ENCODE measurements at regions of chr3 and their contacts with region 1.

Region 1: GRCh38 chr3:55704521-55704920 is 217.4 kb upstream of the WNT5A start:
- DNase-seq: no peak
- ATAC-seq: no peak

Region 2: GRCh38 chr3:55476515-55476914 is 228.0 kb before region 1 on chr3:
- intact Hi-C with region 1: no loop called
- DNase-seq: no peak
- ATAC-seq: no peak

Region 3: DNA sequence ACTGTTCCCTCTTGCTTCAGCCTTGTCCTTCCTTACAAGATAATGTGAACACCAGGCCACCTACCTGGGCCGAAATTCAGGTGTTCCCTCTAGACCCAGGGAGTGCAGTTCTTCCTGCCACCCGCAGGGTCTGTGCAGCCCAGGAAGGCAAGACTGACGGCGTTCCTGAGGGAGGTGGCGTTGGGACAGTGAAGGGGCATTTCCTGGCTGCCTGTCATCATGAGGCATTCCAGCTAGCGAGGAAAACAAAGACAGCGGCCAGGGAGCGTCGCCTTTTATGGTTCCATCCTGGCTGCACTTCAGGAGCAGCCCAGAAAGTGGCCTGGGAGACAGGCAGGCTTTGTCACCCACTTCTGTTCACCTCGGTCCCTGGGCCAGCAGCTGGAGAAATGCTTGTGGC is 132.6 kb before region 1 on chr3:
- intact Hi-C with region 1: loop called in 1 of 2 experiments (anchors 10 kb)
- DNase-seq: peak; percentile 66
- ATAC-seq: peak; percentile 90 to 92

Region 4: DNA sequence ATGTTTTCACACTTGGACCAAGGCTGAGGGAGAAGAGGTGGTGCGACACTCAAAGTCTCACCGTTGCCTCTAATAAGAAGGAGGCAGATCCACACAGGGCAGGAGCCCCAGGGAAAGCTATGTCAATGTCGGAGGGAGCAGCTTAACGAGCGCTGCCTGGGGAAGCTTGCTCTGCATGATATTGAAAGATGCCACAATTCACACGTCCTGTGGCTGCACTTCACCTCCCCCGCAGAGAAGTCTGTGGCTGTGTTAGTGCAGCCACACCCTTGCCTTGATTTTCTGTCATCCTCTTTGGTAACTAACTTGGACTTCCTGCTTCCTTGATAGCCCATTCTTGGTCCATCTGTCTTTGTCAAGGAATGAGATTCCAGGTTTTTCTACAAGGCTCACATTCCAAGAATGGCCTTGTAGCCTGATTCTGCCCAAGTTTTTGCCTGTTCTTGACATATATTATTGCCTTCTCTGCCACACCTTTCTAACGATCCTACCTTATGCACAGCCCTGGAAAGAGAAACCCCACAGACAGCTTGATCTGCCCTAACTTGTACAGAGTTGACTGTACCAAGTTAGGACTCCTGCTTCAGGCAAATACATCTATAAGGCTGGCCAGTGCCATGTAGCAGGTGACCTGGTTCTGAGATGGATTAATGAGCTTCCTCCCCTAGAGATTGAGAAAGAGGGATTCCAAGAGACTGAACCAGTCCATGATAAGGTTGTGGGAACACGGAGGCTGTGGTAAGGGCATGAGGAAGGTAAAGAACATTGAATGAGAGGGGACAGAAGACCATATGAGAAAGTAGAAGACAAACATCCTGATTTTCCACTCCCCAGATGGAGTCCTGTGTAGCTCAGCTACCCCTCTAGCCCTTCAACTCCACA is 64.4 kb before region 1 on chr3:
- intact Hi-C with region 1: no loop called
- DNase-seq: no peak
- ATAC-seq: no peak

Measured in left cardiac atrium (tissue), 4 donors.